ENCODE measurements at regions of chr14 and their contacts with region 1.

Region 1: DNA sequence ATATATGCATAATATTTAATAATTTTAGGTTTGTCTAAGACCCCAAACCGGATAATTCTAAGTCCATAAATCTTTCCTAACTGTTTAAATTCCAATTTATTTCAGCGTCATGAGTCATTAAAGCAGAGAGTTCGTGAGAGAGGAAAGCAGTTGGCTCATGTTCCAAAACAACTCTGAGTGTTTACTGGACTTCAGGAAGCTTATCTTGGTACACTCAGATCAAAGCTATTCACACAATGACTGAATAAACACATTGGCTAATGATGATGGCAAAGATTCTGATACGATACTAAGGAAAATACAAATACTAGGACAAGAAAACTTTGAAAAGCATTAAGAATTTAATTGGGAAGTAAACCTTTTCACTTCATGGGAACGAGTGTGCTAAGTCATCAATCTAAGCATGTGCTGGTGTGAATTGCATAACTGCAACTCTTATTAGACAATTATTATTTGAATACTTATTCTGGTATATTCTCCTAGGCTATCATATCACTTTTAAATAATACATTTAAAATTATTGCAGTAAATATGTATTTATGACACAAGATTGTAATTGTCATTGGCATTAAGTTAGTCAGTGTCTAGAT is 34.8 kb upstream of the CLEC14A start:
- DNase-seq: peak; percentile 87
- H3K4me3 Mint-ChIP-seq: peak overlapping the region; percentile 13
- H3K27ac Mint-ChIP-seq: peak overlapping the region; percentile 76
- H3K4me1 Mint-ChIP-seq: peaks cover 46% of the 10 kb centered on the region
- H3K27me3 Mint-ChIP-seq: no peaks in the 10 kb centered on the region
- CTCF ChIP-seq: no peak

Region 2: DNA sequence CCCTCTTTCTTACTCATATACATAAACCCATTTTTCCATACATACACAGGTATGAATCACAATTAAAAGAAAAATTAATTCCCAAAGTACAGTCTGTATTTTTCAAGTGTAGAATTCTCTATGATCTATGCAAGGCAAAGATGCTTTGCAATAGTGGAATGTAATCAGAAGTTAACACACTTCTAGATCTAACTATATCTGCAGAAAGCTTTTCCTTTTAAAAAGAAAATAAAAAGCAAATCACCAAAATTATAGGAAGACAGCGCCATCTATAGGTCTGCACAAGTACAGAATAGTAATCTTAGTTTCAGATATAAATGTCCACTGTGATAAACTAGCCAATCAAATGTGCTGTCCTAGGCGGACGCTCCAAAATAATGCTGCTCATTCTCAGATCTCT is 1140.3 kb before region 1 on chr14:
- CTCF ChIA-PET with region 1: no interaction called
- POLR2A ChIA-PET with region 1: no interaction called
- intact Hi-C with region 1: no loop called
- DNase-seq: peak; percentile 63
- H3K4me3 Mint-ChIP-seq: no peak overlapping the region
- H3K27ac Mint-ChIP-seq: peak overlapping the region; percentile 16
- H3K4me1 Mint-ChIP-seq: peaks cover 14% of the 10 kb centered on the region
- H3K27me3 Mint-ChIP-seq: no peaks in the 10 kb centered on the region
- CTCF ChIP-seq: peak; percentile 54

Region 3: GRCh38 chr14:38098074-38098836 is 192.4 kb before region 1 on chr14:
- CTCF ChIA-PET with region 1: no interaction called
- POLR2A ChIA-PET with region 1: no interaction called
- intact Hi-C with region 1: no loop called
- DNase-seq: peak; percentile 43
- H3K4me3 Mint-ChIP-seq: no peak overlapping the region
- H3K27ac Mint-ChIP-seq: no peak overlapping the region
- H3K4me1 Mint-ChIP-seq: no peaks in the 10 kb centered on the region
- H3K27me3 Mint-ChIP-seq: no peaks in the 10 kb centered on the region
- CTCF ChIP-seq: no peak

Region 4: GRCh38 chr14:38309522-38310277 is 19.0 kb after region 1 on chr14:
- CTCF ChIA-PET with region 1: interaction called, 3 read pairs
- POLR2A ChIA-PET with region 1: no interaction called
- intact Hi-C with region 1: loop called (anchors 1 kb)
- DNase-seq: no peak
- H3K4me3 Mint-ChIP-seq: no peak overlapping the region
- H3K27ac Mint-ChIP-seq: no peak overlapping the region
- H3K4me1 Mint-ChIP-seq: peaks cover 4% of the 10 kb centered on the region
- H3K27me3 Mint-ChIP-seq: no peaks in the 10 kb centered on the region
- CTCF ChIP-seq: no peak

Region 5: DNA sequence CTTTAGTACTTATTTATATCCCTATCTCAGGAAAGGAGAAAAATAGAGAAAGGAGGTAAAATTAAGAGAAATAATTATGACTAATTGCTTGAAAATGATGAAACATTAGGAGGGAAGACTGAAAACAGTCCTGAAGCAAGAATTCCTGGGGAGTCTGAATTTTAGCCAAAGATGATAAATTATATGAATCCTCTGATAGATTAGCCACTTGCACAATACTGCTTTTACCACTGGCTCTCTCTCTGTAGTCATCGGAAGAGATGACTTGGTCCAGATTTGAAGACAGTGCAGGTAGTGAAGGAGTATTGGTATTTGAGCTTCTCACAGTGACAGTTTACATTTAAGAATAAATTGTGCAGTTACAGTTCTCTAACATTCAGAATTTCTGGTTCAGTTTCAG is 49.0 kb after region 1 on chr14:
- CTCF ChIA-PET with region 1: interaction called, 4 read pairs
- POLR2A ChIA-PET with region 1: no interaction called
- intact Hi-C with region 1: loop called (anchors 2 kb)
- DNase-seq: peak; percentile 23
- H3K4me3 Mint-ChIP-seq: no peak overlapping the region
- H3K27ac Mint-ChIP-seq: peak overlapping the region; percentile 23
- H3K4me1 Mint-ChIP-seq: peaks cover 18% of the 10 kb centered on the region
- H3K27me3 Mint-ChIP-seq: no peaks in the 10 kb centered on the region
- CTCF ChIP-seq: no peak